Naive thymus-derived CD4-positive, alpha-beta T cell (primary cell): ENCODE measurements at regions of chr14 and their contacts with region 1.

Region 1: DNA sequence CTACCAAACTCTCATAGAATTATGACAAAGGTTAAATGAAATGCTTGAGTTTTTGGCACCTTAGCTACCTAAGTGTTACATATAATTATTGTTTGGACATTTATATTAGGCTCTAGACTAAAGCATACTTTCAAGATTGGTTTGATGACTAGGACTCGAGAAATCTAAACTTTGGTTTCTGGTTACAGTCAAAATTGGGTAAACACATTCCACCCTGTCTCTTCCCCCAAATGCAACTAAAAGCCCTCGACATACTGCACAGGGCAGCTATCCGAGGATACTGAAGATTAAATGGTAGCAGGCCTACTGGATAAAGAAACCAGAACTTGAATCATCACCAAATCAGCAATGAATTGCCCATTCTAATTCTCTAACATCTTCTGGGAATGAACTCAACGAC is 369.1 kb downstream of the PRKD1 start:
- DNase-seq: no peak
- ATAC-seq: no peak
- H3K4me3 ChIP-seq: no peak overlapping the region
- H3K4me3 Mint-ChIP-seq: no peak overlapping the region
- H3K27ac ChIP-seq: no peak overlapping the region
- H3K27ac Mint-ChIP-seq: no peak overlapping the region
- H3K4me1 ChIP-seq: no peaks in the 10 kb centered on the region
- H3K4me1 Mint-ChIP-seq: no peaks in the 10 kb centered on the region
- H3K27me3 ChIP-seq: no peaks in the 10 kb centered on the region
- H3K27me3 Mint-ChIP-seq: no peaks in the 10 kb centered on the region

Region 2: GRCh38 chr14:29576927-29577326 is 18.4 kb after region 1 on chr14:
- CTCF ChIA-PET with region 1: no interaction called
- POLR2A ChIA-PET with region 1: no interaction called
- intact Hi-C with region 1: no loop called
- DNase-seq: no peak
- ATAC-seq: no peak
- H3K4me3 ChIP-seq: no peak overlapping the region
- H3K4me3 Mint-ChIP-seq: no peak overlapping the region
- H3K27ac ChIP-seq: no peak overlapping the region
- H3K27ac Mint-ChIP-seq: no peak overlapping the region
- H3K4me1 ChIP-seq: no peaks in the 10 kb centered on the region
- H3K4me1 Mint-ChIP-seq: no peaks in the 10 kb centered on the region
- H3K27me3 ChIP-seq: no peaks in the 10 kb centered on the region
- H3K27me3 Mint-ChIP-seq: no peaks in the 10 kb centered on the region

Region 3: GRCh38 chr14:29724991-29725390 is 166.5 kb after region 1 on chr14:
- CTCF ChIA-PET with region 1: no interaction called
- POLR2A ChIA-PET with region 1: no interaction called
- intact Hi-C with region 1: no loop called
- DNase-seq: no peak
- ATAC-seq: no peak
- H3K4me3 ChIP-seq: no peak overlapping the region
- H3K4me3 Mint-ChIP-seq: no peak overlapping the region
- H3K27ac ChIP-seq: no peak overlapping the region
- H3K27ac Mint-ChIP-seq: no peak overlapping the region
- H3K4me1 ChIP-seq: no peaks in the 10 kb centered on the region
- H3K4me1 Mint-ChIP-seq: no peaks in the 10 kb centered on the region
- H3K27me3 ChIP-seq: no peaks in the 10 kb centered on the region
- H3K27me3 Mint-ChIP-seq: no peaks in the 10 kb centered on the region

Region 4: DNA sequence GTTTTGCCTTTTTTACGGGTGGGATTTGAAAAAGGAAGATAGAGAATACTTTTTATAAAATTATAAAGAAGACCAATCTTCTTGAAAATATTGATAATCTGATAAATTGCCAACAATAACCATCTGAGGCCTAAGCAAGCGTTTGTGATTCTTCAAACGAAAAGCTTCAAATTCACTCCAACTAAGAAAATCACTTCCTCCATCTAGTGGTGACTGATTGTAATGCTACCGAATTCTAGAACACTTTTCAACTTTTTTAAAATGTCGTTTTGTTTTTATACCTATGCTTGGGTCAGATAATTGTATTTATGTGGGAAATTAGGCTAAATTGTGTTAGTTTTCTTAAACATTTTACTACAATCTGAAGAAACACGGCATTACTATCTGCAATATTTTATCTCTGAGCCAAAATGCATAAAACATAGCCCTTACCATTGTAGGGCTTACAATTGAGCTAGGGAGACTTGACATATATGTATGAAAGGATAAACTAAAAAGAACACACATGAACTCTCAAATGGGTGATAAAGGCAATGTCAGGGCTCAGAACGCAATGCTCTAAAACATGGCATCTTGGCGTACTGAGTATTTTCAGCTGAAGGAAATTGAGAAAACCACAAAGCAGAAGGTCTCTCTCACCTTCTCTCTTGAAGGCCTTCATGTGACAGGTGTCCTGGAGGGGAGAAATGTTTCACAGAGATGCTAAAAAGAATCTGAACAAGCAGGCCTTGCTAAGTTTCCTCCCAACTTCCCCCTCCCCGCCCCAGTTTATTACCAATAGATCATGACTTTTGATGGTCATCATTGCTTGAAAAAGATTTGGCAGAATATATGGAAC is 963.6 kb after region 1 on chr14:
- CTCF ChIA-PET with region 1: interaction called, 4 read pairs
- POLR2A ChIA-PET with region 1: no interaction called
- intact Hi-C with region 1: loop called (anchors 5 to 10 kb)
- DNase-seq: peak in 6 of 9 donors; percentile 4 to 55 (median 36)
- ATAC-seq: peak; percentile 70
- H3K4me3 ChIP-seq: no peak overlapping the region
- H3K4me3 Mint-ChIP-seq: peak overlapping the region in 7 of 10 donors; percentile 2 to 59 (median 26)
- H3K27ac ChIP-seq: no peak overlapping the region
- H3K27ac Mint-ChIP-seq: peak overlapping the region in 7 of 9 donors; percentile 6 to 78 (median 43)
- H3K4me1 ChIP-seq: peaks cover 4 to 7% of the 10 kb centered on the region in 2 donors
- H3K4me1 Mint-ChIP-seq: peaks cover 2 to 17% (median 11%) of the 10 kb centered on the region in 7 donors
- H3K27me3 ChIP-seq: no peaks in the 10 kb centered on the region
- H3K27me3 Mint-ChIP-seq: no peaks in the 10 kb centered on the region